ENCODE measurements at regions of chr7 and their contacts with region 1.

Region 1: GRCh38 chr7:135509903-135510602 is at the start of gene CNOT4:
- DNase-seq: peak; percentile 92 to 99 (median 97)

Region 2: GRCh38 chr7:135274495-135275268 is 235.4 kb before region 1 on chr7:
- intact Hi-C with region 1: loop called (anchors 5 kb)
- DNase-seq: peak in 41 of 42 donors; percentile 34 to 92 (median 79)

Region 3: DNA sequence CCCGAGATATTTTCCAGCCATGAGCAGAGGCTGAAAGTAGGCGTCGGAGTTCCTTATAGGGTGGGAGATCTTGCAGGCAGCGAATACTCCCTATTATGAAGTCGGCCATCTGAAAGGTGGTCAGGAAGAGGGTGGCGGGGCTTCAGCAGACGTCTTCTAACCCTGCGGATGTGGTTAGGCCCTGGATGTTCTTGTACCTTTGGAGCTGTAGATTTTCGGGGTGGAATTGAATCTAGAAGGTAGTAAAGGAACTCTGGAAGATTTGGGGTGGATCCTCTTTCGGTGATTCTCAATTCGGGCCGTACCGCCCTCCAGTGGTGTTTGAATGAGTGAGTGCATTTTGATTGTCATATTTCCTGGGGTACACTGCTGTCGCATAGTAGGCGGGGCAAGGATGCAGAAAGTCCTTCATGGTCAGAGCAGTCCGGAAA is 48.3 kb after region 1 on chr7:
- intact Hi-C with region 1: loop called (anchors 5 kb)
- DNase-seq: peak; percentile 16 to 81 (median 58)

Region 4: GRCh38 chr7:135645296-135645904 is 135.3 kb after region 1 on chr7:
- intact Hi-C with region 1: loop called (anchors 10 kb)
- DNase-seq: peak in 18 of 42 donors; percentile 15 to 76 (median 36)

Measured in head of caudate nucleus (tissue), 42 donors.